Calu3 (cell line): ENCODE measurements at regions of chr7 and their contacts with region 1.

Region 1: GRCh38 chr7:105046414-105046813 is 32.4 kb downstream of the KMT2E start:
- DNase-seq: no peak
- H3K4me3 Mint-ChIP-seq: peak overlapping the region; percentile 9
- H3K27ac Mint-ChIP-seq: peak overlapping the region; percentile 56
- H3K4me1 Mint-ChIP-seq: peaks cover 35% of the 10 kb centered on the region
- H3K27me3 Mint-ChIP-seq: no peaks in the 10 kb centered on the region
- CTCF ChIP-seq: no peak

Region 2: DNA sequence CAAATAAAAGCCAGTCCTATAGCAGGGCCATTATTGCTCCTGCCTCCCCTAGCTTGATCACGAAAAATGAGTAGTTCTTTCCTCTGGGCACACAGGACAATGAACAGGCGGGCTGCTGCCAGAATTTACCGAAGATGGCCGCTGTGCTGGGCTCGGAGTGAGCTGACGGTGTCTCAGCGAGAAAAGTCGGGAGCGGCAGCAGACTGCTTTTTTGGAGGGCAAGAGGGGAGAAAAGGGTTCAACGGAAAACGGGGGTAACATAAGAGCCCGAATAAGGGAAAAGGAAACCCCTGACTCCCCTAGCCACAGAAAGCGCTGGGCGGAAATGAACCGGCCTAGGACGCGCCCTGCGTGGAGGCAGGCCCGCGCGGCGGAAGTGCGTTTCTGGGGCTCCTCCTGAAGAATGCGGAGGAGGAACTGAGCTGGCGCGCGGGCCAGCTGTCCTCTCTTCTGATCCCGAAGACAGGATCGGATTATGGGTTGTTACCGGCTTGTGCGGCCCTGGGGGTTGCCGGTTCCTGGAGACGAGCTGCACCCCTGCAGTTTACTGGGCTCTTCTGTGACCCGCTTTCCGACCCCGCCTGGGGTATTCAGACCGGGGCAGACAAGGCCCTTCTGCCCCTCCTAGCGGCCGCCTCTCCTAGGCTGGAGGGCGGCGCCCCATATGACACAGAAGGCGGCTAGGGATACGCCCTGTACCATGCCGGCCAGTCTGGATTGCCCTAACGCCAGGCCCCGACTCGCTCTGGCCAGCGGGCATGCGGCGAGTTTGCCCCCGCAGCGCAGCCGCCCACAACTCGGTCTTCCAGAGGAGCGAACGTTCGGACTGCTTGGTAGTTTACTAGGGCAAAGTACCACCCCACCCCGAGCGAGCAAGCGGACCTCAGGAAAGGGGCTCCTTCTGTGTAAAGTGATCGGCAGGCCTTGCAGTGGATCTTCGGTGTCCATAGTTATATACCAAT is 62.6 kb before region 1 on chr7:
- CTCF ChIA-PET with region 1: no interaction called
- intact Hi-C with region 1: loop called (anchors 1 kb)
- DNase-seq: peak; percentile 75
- H3K4me3 Mint-ChIP-seq: peak overlapping the region; percentile 86
- H3K27ac Mint-ChIP-seq: peak overlapping the region; percentile 98
- H3K4me1 Mint-ChIP-seq: peaks cover 17% of the 10 kb centered on the region
- H3K27me3 Mint-ChIP-seq: no peaks in the 10 kb centered on the region
- CTCF ChIP-seq: no peak

Region 3: DNA sequence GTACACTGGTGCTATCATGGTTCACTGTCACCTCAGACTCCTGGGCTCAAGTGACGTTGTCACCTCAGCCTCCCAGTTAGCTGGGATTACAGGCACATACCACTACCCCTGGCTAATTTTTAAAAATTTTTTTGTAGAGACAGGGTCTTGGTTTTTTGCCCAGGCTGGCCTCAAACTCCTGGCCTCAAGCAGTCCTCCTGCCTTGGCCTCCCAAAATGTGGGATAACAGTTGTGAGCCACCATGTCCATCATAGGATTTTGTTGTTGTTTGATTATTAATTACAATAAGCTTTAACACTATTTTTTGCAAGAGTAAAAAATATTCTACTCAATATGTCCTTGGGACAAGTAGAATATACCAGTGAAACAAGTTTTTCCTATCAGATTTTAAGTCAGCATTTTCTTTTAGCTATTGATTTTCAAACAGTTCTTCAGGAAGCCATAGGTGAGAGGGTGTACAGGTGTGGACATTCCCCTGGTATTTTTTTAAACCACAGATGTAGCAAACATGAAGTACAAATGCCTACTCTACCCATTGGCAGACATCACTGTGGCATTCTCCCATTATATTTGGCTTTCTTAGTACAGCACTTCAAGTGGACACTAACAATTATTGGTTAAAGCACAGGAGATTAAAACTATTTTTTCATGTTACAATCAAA is 13.7 kb before region 1 on chr7:
- CTCF ChIA-PET with region 1: interaction called, 13 read pairs
- intact Hi-C with region 1: no loop called
- DNase-seq: no peak
- H3K4me3 Mint-ChIP-seq: no peak overlapping the region
- H3K27ac Mint-ChIP-seq: no peak overlapping the region
- H3K4me1 Mint-ChIP-seq: peaks cover 17% of the 10 kb centered on the region
- H3K27me3 Mint-ChIP-seq: no peaks in the 10 kb centered on the region
- CTCF ChIP-seq: no peak

Region 4: GRCh38 chr7:105149827-105150226 is 103.4 kb after region 1 on chr7:
- CTCF ChIA-PET with region 1: no interaction called
- intact Hi-C with region 1: no loop called
- DNase-seq: no peak
- H3K4me3 Mint-ChIP-seq: no peak overlapping the region
- H3K27ac Mint-ChIP-seq: no peak overlapping the region
- H3K4me1 Mint-ChIP-seq: peaks cover 10% of the 10 kb centered on the region
- H3K27me3 Mint-ChIP-seq: no peaks in the 10 kb centered on the region
- CTCF ChIP-seq: no peak